ENCODE measurements at regions of chr9 and their contacts with region 1.

Region 1: GRCh38 chr9:34637356-34638137 is at the start of gene SIGMAR1:
- DNase-seq: no peak
- H3K4me3 ChIP-seq: peak within 1 kb of the TSS; percentile 78
- H3K27me3 ChIP-seq: no peaks in the 10 kb centered on the region
- CTCF ChIP-seq: no peak
- polyA plus RNA-seq, gene SIGMAR1: 65.4 and 95.5 TPM in 2 replicates

Region 2: GRCh38 chr9:34603610-34604231 is 33.8 kb before region 1 on chr9:
- CTCF ChIA-PET with region 1: interaction called, 26 read pairs
- POLR2A ChIA-PET with region 1: no interaction called
- DNase-seq: no peak
- H3K4me3 ChIP-seq: no peak overlapping the region
- H3K27me3 ChIP-seq: peaks cover 4% of the 10 kb centered on the region
- CTCF ChIP-seq: peak; percentile 88

Region 3: DNA sequence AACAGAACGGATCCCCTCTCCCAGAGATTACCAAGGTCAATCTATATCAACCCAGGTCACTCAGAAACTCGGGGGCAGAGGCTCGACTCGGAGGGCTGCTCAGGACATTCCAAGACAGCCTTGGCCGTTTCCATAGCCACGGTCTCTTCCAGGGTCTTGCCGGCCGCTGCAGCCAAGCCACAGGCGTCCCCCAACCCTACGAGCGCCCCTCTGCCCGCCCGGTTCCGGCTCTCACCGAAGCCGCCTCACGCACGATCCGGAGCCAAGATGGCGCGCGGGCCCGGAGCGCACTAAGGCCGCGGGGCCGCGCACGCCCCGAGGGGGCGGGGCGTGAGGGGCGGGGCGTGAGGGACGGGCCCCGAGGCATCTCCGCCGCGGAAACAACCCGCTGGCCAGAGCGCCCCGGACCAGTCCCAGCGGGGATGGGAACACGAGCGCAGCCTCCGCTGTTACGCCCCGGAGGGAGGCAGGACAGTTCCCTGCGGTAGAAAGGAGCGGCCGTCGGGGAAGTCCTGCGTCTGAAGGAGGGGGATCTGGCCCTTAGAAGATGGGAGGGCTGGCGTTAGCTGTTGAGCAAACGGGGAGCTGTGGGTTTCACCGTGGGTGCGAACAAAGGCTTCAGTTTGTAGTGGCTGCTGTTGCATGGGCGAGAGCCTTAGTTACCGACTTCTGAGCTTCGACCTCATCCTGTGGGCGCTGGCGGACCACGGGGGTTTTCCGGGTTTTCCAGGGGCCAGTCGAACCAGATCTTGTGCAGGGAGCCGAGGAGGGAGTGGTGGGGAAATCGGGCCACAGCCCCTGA is 25.5 kb before region 1 on chr9 and contains the start of gene RPP25L:
- CTCF ChIA-PET with region 1: interaction called, 112 read pairs
- POLR2A ChIA-PET with region 1: no interaction called
- DNase-seq: peak; percentile 19
- H3K4me3 ChIP-seq: peak within 1 kb of the TSS; percentile 70
- H3K27me3 ChIP-seq: no peaks in the 10 kb centered on the region
- CTCF ChIP-seq: no peak
- polyA plus RNA-seq, gene RPP25L: 32.9 and 38.8 TPM in 2 replicates

Region 4: DNA sequence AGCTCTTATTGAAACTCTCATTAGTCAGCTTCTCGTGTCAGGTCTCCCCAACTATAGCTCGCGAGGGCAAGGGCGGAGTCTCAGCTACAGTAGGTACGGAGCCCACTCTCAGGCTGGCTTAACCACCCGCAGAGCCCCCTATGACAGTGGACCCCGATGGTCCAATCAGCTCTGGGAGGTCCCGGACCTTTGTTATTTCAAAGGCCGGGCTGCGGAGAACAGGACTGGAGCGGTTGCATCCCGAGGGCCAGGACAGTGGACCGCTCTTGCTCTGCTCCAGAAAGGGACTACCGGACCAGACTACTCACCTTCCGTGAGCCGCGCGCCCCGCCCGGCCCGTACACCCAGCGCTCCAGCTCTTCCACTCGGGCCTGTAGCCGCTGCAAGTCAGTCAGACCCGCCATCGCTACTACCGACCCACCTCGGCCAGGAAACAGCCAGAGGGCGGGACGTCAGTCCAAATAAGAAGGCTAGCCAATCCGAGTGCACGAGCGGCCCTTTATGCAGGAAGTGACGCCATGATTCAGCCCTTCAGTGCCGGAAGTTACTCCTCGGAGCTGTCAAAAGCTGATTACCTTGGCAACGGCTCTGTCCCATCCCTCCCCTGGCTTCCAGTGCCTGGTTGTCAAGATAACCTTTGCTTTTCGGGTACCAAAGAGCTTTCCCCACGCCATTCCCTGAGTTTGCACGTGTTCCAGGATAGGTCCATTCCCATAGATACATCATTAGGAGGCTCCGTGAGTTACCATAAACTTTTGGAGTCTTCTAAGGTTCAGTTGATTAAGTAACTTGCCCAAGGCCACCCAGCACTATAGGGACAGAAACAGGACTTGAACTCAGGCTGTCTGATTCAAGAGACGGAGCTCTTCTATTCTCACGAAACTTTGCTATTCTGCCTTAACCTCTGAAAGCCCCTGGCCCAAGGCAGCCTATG is 17.2 kb before region 1 on chr9 and contains the start of gene DCTN3:
- CTCF ChIA-PET with region 1: interaction called, 112 read pairs
- POLR2A ChIA-PET with region 1: no interaction called
- DNase-seq: peak; percentile 74
- H3K4me3 ChIP-seq: peak within 1 kb of the TSS; percentile 96
- H3K27me3 ChIP-seq: peaks cover 21% of the 10 kb centered on the region
- CTCF ChIP-seq: no peak
- polyA plus RNA-seq, gene DCTN3: 74.7 and 149 TPM in 2 replicates

Region 5: DNA sequence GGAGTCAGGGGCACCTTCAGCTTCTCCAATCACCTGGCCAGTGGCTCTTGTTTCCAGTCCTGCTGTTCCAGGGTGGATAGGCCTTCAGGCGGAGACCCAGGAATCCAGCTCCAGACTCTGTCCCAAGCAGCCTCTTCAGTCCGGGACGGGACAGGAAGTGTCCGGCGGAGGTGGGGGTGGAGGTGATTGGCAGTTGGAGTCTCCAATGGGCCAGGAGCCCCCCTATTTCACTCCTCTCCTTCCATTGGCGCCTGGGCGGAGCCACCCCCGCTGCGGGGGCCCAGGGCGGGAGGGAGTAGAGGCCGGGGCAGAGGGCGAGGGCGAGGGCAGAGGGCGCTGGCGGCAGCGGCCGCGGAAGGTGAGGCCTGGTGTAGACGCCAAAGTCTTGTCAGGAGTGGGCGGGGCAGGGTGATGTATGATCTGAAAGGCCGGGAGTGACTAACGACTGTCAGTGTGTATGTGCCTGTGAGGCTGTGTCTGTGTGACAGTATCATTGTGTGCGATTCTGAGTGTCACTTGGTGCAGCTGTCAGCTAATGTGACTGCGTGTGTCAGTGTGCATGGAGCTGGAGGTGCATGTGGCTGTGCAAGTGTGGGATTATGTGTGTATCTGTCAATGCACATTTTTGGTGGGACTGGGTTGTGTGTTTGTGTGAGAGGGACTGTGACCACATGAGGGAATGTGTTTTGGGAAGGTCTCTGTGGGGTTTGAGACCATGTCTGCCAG is 14.5 kb after region 1 on chr9 and contains the start of gene IL11RA:
- CTCF ChIA-PET with region 1: interaction called, 87 read pairs
- POLR2A ChIA-PET with region 1: interaction called, 5 read pairs
- DNase-seq: no peak
- H3K4me3 ChIP-seq: peak within 1 kb of the TSS; percentile 47
- H3K27me3 ChIP-seq: no peaks in the 10 kb centered on the region
- CTCF ChIP-seq: no peak
- polyA plus RNA-seq, gene IL11RA: 21.8 and 38.4 TPM in 2 replicates